ENCODE measurements at regions of chr20 and their contacts with region 1.

Region 1: GRCh38 chr20:23350196-23350903 is at the start of gene NXT1:
- DNase-seq: peak; percentile 96
- H3K4me3 Mint-ChIP-seq: peak within 1 kb of the TSS; percentile 86
- H3K27ac Mint-ChIP-seq: peak within 1 kb of the TSS; percentile 100
- H3K4me1 Mint-ChIP-seq: peaks cover 35% of the 10 kb centered on the region
- H3K27me3 Mint-ChIP-seq: no peaks in the 10 kb centered on the region
- total RNA-seq, gene NXT1: 26.2 to 28.4 TPM

Region 2: DNA sequence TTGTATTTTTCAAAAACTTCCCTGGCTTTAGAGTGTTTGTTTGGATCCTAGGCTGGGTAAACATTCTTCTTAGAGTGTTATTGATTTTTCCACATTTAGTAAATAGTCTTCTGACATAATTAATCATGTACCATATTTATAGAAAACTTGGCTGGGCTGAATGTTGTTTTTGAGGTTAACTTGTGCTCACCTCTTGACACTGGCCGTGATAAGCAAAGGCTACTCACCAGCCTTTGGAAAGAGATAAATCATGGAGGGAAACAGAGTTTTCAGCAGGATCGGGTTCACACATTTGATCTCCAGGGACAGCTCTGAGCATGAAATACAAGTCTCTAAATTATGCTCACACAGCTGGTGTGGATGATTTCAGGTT is 258.0 kb before region 1 on chr20:
- CTCF ChIA-PET with region 1: no interaction called
- POLR2A ChIA-PET with region 1: no interaction called
- DNase-seq: no peak
- H3K4me3 Mint-ChIP-seq: no peak overlapping the region
- H3K27ac Mint-ChIP-seq: no peak overlapping the region
- H3K4me1 Mint-ChIP-seq: peaks cover 7% of the 10 kb centered on the region
- H3K27me3 Mint-ChIP-seq: peaks cover 10% of the 10 kb centered on the region

Region 3: GRCh38 chr20:23363257-23363649 is 12.9 kb after region 1 on chr20:
- CTCF ChIA-PET with region 1: interaction called, 54 read pairs
- POLR2A ChIA-PET with region 1: interaction called, 82 read pairs
- DNase-seq: no peak
- H3K4me3 Mint-ChIP-seq: peak overlapping the region; percentile 95
- H3K27ac Mint-ChIP-seq: peak overlapping the region; percentile 89
- H3K4me1 Mint-ChIP-seq: peaks cover 72% of the 10 kb centered on the region
- H3K27me3 Mint-ChIP-seq: no peaks in the 10 kb centered on the region

Region 4: GRCh38 chr20:23399568-23400241 is 49.4 kb after region 1 on chr20:
- CTCF ChIA-PET with region 1: interaction called, 4 read pairs
- POLR2A ChIA-PET with region 1: interaction called, 16 read pairs
- DNase-seq: peak; percentile 24
- H3K4me3 Mint-ChIP-seq: no peak overlapping the region
- H3K27ac Mint-ChIP-seq: peak overlapping the region; percentile 18
- H3K4me1 Mint-ChIP-seq: peaks cover 50% of the 10 kb centered on the region
- H3K27me3 Mint-ChIP-seq: no peaks in the 10 kb centered on the region

Region 5: DNA sequence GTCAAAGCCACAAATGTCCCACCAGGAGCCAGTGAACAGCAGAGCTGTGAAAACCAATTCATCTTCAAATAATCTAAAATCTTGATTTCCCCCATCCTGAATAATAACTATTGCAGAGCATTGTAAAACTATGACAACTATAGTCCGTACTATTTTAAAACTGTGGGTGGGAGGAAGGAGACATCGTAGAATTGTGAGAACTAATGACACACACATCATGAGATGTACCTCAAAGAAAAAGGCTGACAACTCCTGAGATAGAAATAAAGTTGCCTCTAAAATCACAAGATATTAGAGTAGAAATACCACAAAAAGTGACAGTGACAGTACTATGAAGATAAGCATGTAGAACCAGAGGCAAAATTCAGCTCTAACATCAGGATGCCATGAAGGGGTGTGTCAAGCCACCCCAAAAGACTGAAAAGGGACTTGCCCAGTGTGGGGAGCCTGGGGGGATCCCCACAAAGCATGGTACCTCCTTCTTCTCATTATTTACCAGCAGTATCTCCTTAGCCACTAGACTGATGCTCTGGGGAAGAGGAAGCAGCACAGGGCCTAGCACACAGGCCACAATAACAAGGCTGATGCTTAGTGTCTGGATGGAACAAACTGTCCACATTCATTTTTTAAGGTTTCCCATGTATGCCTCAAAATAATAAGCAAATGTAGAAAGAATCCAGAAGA is 57.6 kb after region 1 on chr20:
- CTCF ChIA-PET with region 1: interaction called, 3 read pairs
- POLR2A ChIA-PET with region 1: interaction called, 10 read pairs
- DNase-seq: peak; percentile 27
- H3K4me3 Mint-ChIP-seq: no peak overlapping the region
- H3K27ac Mint-ChIP-seq: peak overlapping the region; percentile 28
- H3K4me1 Mint-ChIP-seq: peaks cover 35% of the 10 kb centered on the region
- H3K27me3 Mint-ChIP-seq: no peaks in the 10 kb centered on the region

Region 6: DNA sequence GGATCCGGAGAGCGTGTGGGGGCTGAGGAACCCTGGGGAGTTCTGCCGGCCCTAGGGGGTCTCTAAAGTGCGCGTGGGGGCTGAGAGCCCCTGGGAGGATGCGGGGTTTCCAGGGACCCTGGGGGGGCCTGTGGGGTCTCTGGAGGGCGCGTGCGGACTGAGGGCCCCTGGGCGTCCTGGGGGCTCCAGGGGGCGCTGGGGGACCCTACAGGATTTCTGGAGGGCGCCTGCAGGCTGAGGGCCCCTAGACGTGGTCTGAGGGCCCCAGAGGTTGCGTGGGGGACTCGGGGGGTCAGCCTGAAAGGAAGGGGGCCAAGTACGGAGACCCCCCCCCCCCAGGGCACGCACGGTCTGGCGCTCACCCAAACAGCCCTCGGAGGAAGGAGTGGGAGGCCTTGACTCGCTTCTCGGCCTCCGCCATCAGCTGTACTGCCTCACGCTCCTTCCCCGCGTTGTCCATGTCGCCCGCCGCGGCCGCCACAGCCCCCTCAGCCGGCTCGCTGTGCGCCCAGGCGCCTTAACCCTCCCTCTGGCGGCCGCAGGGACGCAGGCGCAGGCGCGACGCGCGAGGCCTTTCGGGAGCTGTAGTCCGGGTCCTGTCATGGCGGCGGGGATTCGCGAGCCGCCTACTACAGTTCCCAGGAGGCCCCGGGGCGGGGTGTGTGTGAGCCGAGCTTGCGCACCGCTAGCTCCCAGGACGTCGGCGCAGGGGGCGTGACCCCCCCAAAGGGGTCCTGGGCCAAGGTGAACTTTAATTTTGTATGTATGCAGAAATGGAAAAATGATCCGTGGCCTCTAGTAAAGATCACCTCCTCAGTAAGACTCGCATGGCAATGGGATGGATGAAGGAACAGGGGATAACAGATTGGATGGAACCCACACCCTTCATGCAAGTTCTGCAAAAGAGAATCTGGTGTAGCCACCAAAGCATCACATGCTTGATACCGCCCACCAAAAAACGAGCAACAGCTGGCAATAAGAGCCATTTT is 70.9 kb after region 1 on chr20 and contains the start of gene NAPB:
- CTCF ChIA-PET with region 1: interaction called, 79 read pairs
- POLR2A ChIA-PET with region 1: interaction called, 122 read pairs
- DNase-seq: peak; percentile 94
- H3K4me3 Mint-ChIP-seq: peak within 1 kb of the TSS; percentile 95
- H3K27ac Mint-ChIP-seq: peak within 1 kb of the TSS; percentile 71
- H3K4me1 Mint-ChIP-seq: peaks cover 51% of the 10 kb centered on the region
- H3K27me3 Mint-ChIP-seq: no peaks in the 10 kb centered on the region
- total RNA-seq, gene NAPB: 16.0 TPM

Region 7: DNA sequence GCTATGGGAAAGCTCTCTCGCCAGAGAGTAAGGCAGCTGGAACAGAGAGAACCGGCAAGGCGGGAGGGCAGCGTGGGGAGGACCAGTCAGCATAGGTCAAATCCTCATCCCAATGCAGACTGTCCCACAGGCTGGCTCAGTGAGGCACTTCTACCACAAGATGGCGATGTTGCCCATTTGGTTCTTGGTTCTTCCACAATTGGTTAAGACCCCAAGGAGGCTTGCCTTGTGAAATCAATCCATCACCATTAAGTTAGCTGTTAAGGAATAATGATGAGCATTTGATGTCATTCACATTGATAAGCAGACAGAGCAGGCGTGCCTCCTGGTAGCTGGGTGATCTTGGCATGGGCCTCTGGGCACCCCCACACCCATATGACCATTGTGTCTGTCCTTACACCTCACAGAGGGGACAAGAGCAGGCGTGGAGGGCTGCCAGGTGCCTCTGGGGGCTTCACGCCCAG is 91.5 kb after region 1 on chr20:
- CTCF ChIA-PET with region 1: interaction called, 15 read pairs
- POLR2A ChIA-PET with region 1: no interaction called
- DNase-seq: peak; percentile 57
- H3K4me3 Mint-ChIP-seq: no peak overlapping the region
- H3K27ac Mint-ChIP-seq: no peak overlapping the region
- H3K4me1 Mint-ChIP-seq: no peaks in the 10 kb centered on the region
- H3K27me3 Mint-ChIP-seq: peaks cover 3% of the 10 kb centered on the region